Dorsolateral prefrontal cortex (tissue), 120 donors: ENCODE measurements at regions of chr3 and their contacts with region 1.

Region 1: DNA sequence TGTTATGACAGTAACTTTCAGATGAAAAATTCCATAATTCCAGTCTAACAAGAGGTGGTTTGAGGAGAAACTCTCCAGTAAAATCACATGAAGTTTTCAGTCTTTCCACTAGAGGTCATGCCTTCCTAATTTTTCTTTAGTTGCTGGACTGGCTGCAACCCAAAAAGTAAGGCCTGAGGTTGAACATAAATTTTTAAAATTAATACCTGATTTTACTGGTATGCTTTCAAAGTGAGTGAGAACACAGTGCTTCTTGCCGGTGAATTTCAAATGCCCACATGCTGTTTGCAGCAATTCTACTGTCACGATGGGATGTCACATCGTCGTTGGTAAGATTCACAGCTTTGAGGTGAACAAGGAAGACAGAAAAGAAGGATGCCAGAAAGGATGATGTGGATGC is 89.0 kb upstream of the FGF12 start:
- DNase-seq: no peak
- H3K4me3 ChIP-seq: no peak overlapping the region
- H3K27ac ChIP-seq: no peak overlapping the region
- H3K27me3 ChIP-seq: no peaks in the 10 kb centered on the region
- CTCF ChIP-seq: peak; percentile 64 to 96 (median 86)

Region 2: GRCh38 chr3:192917404-192918274 is 101.3 kb after region 1 on chr3 and contains the start of gene MB21D2:
- intact Hi-C with region 1: loop called (anchors 2 to 5 kb)
- DNase-seq: peak; percentile 38 to 81 (median 70)
- H3K4me3 ChIP-seq: peak within 1 kb of the TSS; percentile 54 to 97 (median 83)
- H3K27ac ChIP-seq: peak within 1 kb of the TSS; percentile 62 to 98 (median 95)
- H3K27me3 ChIP-seq: no peaks in the 10 kb centered on the region
- CTCF ChIP-seq: peak in 18 of 56 donors; percentile 7 to 48 (median 34)
- total RNA-seq, gene MB21D2: 3.8 to 14.3 (median 8.3) TPM

Region 3: DNA sequence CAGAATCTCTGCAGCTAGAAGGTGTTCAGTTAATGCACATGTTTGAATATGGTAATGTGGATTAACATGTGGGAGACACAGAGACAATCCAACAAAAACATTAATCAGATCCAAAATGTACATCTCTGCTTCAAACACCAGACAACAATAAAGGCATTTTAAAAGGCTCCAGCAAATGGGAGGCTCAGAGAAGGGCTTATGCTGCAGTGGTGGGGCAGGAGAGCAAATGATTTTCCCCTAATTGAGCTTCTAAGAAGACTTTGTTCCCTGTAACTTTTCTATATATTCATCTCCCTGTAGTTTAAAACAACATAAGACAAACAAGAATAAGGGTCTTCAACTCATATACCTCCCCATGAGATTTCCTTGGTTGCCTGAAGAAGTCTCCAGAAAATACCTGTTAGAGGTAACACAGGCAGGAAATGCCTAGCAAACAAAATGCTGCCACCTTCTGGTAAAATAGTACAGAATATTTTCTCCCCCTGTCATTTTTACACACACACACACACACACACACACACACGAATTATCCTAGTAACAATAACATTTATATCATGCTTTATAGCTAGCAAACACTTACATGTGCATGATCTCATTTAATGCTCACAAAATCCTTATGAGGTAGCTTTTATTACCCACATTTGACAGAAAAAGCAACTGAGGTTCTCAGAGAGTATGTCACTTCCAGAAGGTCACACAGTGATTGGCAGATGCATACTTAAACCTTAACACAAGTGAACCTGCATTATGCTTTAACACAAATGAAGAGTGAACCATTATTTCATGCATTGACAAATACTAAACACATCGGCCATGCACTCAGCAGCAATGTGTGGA is 224.7 kb after region 1 on chr3:
- intact Hi-C with region 1: loop called (anchors 2 to 5 kb)
- DNase-seq: no peak
- H3K4me3 ChIP-seq: no peak overlapping the region
- H3K27ac ChIP-seq: no peak overlapping the region
- H3K27me3 ChIP-seq: no peaks in the 10 kb centered on the region
- CTCF ChIP-seq: peak in 55 of 56 donors; percentile 10 to 80 (median 51)

Region 4: GRCh38 chr3:193129601-193130000 is 313.2 kb after region 1 on chr3:
- intact Hi-C with region 1: loop called in 1 of 2 experiments (anchors 10 kb)
- DNase-seq: no peak
- H3K4me3 ChIP-seq: no peak overlapping the region
- H3K27ac ChIP-seq: no peak overlapping the region
- H3K27me3 ChIP-seq: peaks cover 0 to 12% (median 0%) of the 10 kb centered on the region in 45 donors
- CTCF ChIP-seq: no peak

Region 5: GRCh38 chr3:193452338-193452737 is 636.0 kb after region 1 on chr3:
- intact Hi-C with region 1: loop called (anchors 10 kb)
- DNase-seq: no peak
- H3K4me3 ChIP-seq: no peak overlapping the region
- H3K27ac ChIP-seq: no peak overlapping the region
- H3K27me3 ChIP-seq: no peaks in the 10 kb centered on the region
- CTCF ChIP-seq: peak in 36 of 56 donors; percentile 10 to 55 (median 28)

Region 6: DNA sequence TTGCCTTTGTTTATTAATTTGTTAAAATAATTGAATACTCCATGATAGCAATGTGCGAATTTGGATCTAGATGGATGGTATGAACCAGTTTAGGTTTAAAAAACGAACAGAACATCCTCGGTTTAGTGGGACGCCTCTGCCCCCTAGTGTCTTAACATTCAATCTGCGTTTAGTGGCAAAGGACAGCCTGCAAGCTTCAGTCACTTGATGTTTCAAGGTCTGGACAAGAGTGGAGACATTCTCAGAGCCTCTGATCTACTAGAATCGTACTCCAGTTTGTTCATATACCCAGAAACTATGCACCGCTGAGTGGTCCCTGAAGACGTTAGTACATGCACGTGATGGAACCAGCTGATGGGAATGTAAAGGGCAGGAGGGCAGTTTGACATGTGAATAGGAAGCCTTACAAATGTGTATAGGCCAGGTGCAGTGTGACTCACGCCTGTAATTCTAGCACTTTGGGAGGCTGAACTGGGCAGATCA is 756.1 kb after region 1 on chr3:
- intact Hi-C with region 1: loop called (anchors 2 to 5 kb)
- DNase-seq: peak in 8 of 10 donors; percentile 51 to 82 (median 64)
- H3K4me3 ChIP-seq: no peak overlapping the region
- H3K27ac ChIP-seq: no peak overlapping the region
- H3K27me3 ChIP-seq: no peaks in the 10 kb centered on the region
- CTCF ChIP-seq: peak; percentile 66 to 96 (median 86)

Region 7: GRCh38 chr3:193592944-193593667 is 776.8 kb after region 1 on chr3 and contains the start of gene OPA1:
- intact Hi-C with region 1: loop called in 1 of 2 experiments (anchors 5 kb)
- DNase-seq: peak; percentile 91 to 98 (median 96)
- H3K4me3 ChIP-seq: peak within 1 kb of the TSS; percentile 60 to 100 (median 93)
- H3K27ac ChIP-seq: peak within 1 kb of the TSS; percentile 38 to 96 (median 81)
- H3K27me3 ChIP-seq: no peaks in the 10 kb centered on the region
- CTCF ChIP-seq: peak in 52 of 56 donors; percentile 18 to 72 (median 42)
- total RNA-seq, gene OPA1: 66.6 to 180 (median 124) TPM